Adrenal gland (tissue), 19 donors: ENCODE measurements at regions of chr11 and their contacts with region 1.

Region 1: DNA sequence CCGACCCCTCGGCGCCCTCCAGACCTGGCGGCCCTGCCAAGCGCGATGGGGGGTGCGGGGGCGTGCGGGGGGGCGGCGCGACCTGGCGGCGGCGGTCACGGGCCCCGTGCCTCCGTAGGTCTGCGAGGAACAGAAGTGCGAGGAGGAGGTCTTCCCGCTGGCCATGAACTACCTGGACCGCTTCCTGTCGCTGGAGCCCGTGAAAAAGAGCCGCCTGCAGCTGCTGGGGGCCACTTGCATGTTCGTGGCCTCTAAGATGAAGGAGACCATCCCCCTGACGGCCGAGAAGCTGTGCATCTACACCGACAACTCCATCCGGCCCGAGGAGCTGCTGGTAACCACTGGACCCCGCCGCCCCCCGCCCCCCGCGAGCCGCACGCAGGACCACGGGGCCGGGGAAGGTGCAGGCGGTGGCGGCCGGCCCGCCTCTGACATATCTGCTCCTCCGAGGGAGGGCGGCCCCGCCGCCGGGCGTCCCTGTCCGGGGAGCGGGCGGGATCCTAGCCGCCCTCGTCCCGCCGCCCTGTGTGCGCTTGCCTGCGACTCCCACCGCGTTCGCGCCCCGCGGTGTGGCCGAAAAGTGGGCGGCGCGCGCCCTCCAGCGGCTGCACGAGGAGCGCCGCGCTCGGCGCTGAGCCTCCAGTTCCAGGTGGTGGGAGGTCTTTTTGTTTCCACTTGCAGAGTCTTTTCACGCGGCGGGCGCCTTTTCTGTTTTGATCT is 2.1 kb downstream of the CCND1 start:
- DNase-seq: peak; percentile 73 to 89 (median 82)
- H3K4me3 ChIP-seq: peak overlapping the region; percentile 65 to 73 (median 70)
- H3K27ac ChIP-seq: peak overlapping the region in 4 of 5 donors; percentile 64 to 88 (median 82)
- H3K4me1 ChIP-seq: peaks cover 32 to 47% of the 10 kb centered on the region in 2 donors
- H3K27me3 ChIP-seq: no peaks in the 10 kb centered on the region
- CTCF ChIP-seq: peak; percentile 61 to 98 (median 85)
- POLR2A ChIP-seq: peak; percentile 26 to 58

Region 2: GRCh38 chr11:68924073-68924945 is 718.8 kb before region 1 on chr11:
- intact Hi-C with region 1: loop called in 1 of 2 experiments (anchors 5 kb)
- DNase-seq: no peak
- H3K4me3 ChIP-seq: no peak overlapping the region
- H3K27ac ChIP-seq: no peak overlapping the region
- H3K4me1 ChIP-seq: peaks cover 0 to 10% of the 10 kb centered on the region in 2 donors
- H3K27me3 ChIP-seq: no peaks in the 10 kb centered on the region
- CTCF ChIP-seq: no peak
- POLR2A ChIP-seq: no peak

Region 3: GRCh38 chr11:69101115-69101791 is 541.8 kb before region 1 on chr11:
- intact Hi-C with region 1: loop called (anchors 2 kb)
- DNase-seq: peak; percentile 70 to 82 (median 76)
- H3K4me3 ChIP-seq: no peak overlapping the region
- H3K27ac ChIP-seq: no peak overlapping the region
- H3K4me1 ChIP-seq: no peaks in the 10 kb centered on the region
- H3K27me3 ChIP-seq: no peaks in the 10 kb centered on the region
- CTCF ChIP-seq: peak; percentile 91 to 99 (median 97)
- POLR2A ChIP-seq: no peak

Region 4: GRCh38 chr11:69296890-69297786 is 345.9 kb before region 1 on chr11:
- intact Hi-C with region 1: loop called (anchors 5 kb)
- DNase-seq: peak; percentile 91 to 97 (median 95)
- H3K4me3 ChIP-seq: peak overlapping the region in 1 of 4 donors; percentile 42
- H3K27ac ChIP-seq: peak overlapping the region; percentile 58 to 87 (median 85)
- H3K4me1 ChIP-seq: peaks cover 30% of the 10 kb centered on the region in 2 donors
- H3K27me3 ChIP-seq: no peaks in the 10 kb centered on the region
- CTCF ChIP-seq: no peak
- POLR2A ChIP-seq: peak in 1 of 2 donors; percentile 20

Region 5: GRCh38 chr11:69443138-69443967 is 199.7 kb before region 1 on chr11:
- intact Hi-C with region 1: loop called in 1 of 2 experiments (anchors 5 kb)
- DNase-seq: peak; percentile 89 to 92 (median 91)
- H3K4me3 ChIP-seq: peak overlapping the region in 1 of 4 donors; percentile 44
- H3K27ac ChIP-seq: peak overlapping the region; percentile 22 to 91 (median 78)
- H3K4me1 ChIP-seq: peaks cover 15 to 19% of the 10 kb centered on the region in 2 donors
- H3K27me3 ChIP-seq: no peaks in the 10 kb centered on the region
- CTCF ChIP-seq: no peak
- POLR2A ChIP-seq: peak in 1 of 2 donors; percentile 44

Region 6: GRCh38 chr11:69463181-69463994 is 179.7 kb before region 1 on chr11:
- intact Hi-C with region 1: loop called in 1 of 2 experiments (anchors 10 kb)
- DNase-seq: peak in 1 of 7 donors; percentile 31
- H3K4me3 ChIP-seq: no peak overlapping the region
- H3K27ac ChIP-seq: peak overlapping the region in 1 of 5 donors; percentile 67
- H3K4me1 ChIP-seq: no peaks in the 10 kb centered on the region
- H3K27me3 ChIP-seq: no peaks in the 10 kb centered on the region
- CTCF ChIP-seq: no peak
- POLR2A ChIP-seq: no peak

Region 7: DNA sequence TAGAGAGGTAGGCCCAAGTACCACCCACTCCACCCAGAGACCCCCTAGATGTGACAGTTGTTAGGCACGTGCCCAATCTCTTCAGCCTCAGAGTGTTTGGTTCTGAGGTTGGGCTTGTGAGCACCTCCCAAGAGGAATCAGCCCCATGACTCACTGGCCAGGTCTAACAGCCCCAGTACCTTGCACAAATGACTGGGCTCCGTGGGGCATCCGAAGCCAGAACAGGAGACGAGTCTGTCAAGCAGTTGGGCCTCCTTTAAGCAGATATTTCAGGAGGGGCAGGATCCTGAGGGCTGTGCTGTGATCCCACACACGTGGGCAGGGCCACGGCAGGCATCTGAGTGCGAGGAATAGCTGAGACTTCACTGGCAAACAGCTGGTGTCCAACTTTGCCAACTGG is 89.8 kb after region 1 on chr11:
- intact Hi-C with region 1: no loop called
- DNase-seq: no peak
- H3K4me3 ChIP-seq: no peak overlapping the region
- H3K27ac ChIP-seq: no peak overlapping the region
- H3K4me1 ChIP-seq: no peaks in the 10 kb centered on the region
- H3K27me3 ChIP-seq: peaks cover 5% of the 10 kb centered on the region
- CTCF ChIP-seq: no peak
- POLR2A ChIP-seq: no peak